ENCODE measurements at regions of chr16 and their contacts with region 1.

Region 1: GRCh38 chr16:47141773-47142485 is 1.8 kb downstream of the NETO2 start:
- DNase-seq: peak; percentile 75 to 87 (median 81)
- ATAC-seq: peak; percentile 86 to 95 (median 90)
- H3K4me3 ChIP-seq: peak overlapping the region in 11 of 12 donors; percentile 44 to 74 (median 61)
- H3K27ac ChIP-seq: peak overlapping the region in 2 of 12 donors; percentile 60 to 67
- H3K4me1 ChIP-seq: peaks cover 0 to 27% (median 3%) of the 10 kb centered on the region in 12 donors
- H3K27me3 ChIP-seq: peaks cover 0 to 4% (median 0%) of the 10 kb centered on the region in 9 donors
- CTCF ChIP-seq: peak; percentile 80 to 96 (median 90)
- POLR2A ChIP-seq: no peak

Region 2: GRCh38 chr16:46973207-46973995 is 168.5 kb before region 1 on chr16 and contains the start of gene DNAJA2:
- intact Hi-C with region 1: loop called in 1 of 10 experiments (anchors 10 kb)
- DNase-seq: peak; percentile 93 to 97 (median 94)
- ATAC-seq: peak; percentile 97 to 99 (median 99)
- H3K4me3 ChIP-seq: peak within 1 kb of the TSS; percentile 72 to 98 (median 84)
- H3K27ac ChIP-seq: peak within 1 kb of the TSS; percentile 90 to 99 (median 96)
- H3K4me1 ChIP-seq: peaks cover 0 to 53% (median 39%) of the 10 kb centered on the region in 12 donors
- H3K27me3 ChIP-seq: no peaks in the 10 kb centered on the region
- CTCF ChIP-seq: peak in 2 of 12 donors; percentile 23 to 29
- POLR2A ChIP-seq: peak in 1 of 2 donors; percentile 91
- total RNA-seq, gene DNAJA2: 58.5 to 92.6 (median 81.4) TPM

Region 3: GRCh38 chr16:47045023-47045422 is 96.9 kb before region 1 on chr16:
- intact Hi-C with region 1: loop called in 1 of 10 experiments (anchors 5 kb)
- DNase-seq: no peak
- ATAC-seq: no peak
- H3K4me3 ChIP-seq: no peak overlapping the region
- H3K27ac ChIP-seq: no peak overlapping the region
- H3K4me1 ChIP-seq: peaks cover 0 to 5% (median 0%) of the 10 kb centered on the region in 12 donors
- H3K27me3 ChIP-seq: no peaks in the 10 kb centered on the region
- CTCF ChIP-seq: peak in 1 of 12 donors; percentile 16
- POLR2A ChIP-seq: no peak

Region 4: GRCh38 chr16:47644166-47644565 is 502.2 kb after region 1 on chr16:
- intact Hi-C with region 1: loop called in 1 of 10 experiments (anchors 5 kb)
- DNase-seq: peak in 3 of 5 donors; percentile 27 to 45 (median 39)
- ATAC-seq: peak in 3 of 4 donors; percentile 24 to 55 (median 54)
- H3K4me3 ChIP-seq: no peak overlapping the region
- H3K27ac ChIP-seq: peak overlapping the region in 1 of 12 donors; percentile 23
- H3K4me1 ChIP-seq: peaks cover 0 to 25% (median 8%) of the 10 kb centered on the region in 12 donors
- H3K27me3 ChIP-seq: no peaks in the 10 kb centered on the region
- CTCF ChIP-seq: no peak
- POLR2A ChIP-seq: no peak

Region 5: GRCh38 chr16:48064971-48065370 is 923.0 kb after region 1 on chr16:
- intact Hi-C with region 1: loop called in 1 of 10 experiments (anchors 5 kb)
- DNase-seq: no peak
- ATAC-seq: no peak
- H3K4me3 ChIP-seq: no peak overlapping the region
- H3K27ac ChIP-seq: no peak overlapping the region
- H3K4me1 ChIP-seq: no peaks in the 10 kb centered on the region
- H3K27me3 ChIP-seq: no peaks in the 10 kb centered on the region
- CTCF ChIP-seq: no peak
- POLR2A ChIP-seq: no peak

Region 6: DNA sequence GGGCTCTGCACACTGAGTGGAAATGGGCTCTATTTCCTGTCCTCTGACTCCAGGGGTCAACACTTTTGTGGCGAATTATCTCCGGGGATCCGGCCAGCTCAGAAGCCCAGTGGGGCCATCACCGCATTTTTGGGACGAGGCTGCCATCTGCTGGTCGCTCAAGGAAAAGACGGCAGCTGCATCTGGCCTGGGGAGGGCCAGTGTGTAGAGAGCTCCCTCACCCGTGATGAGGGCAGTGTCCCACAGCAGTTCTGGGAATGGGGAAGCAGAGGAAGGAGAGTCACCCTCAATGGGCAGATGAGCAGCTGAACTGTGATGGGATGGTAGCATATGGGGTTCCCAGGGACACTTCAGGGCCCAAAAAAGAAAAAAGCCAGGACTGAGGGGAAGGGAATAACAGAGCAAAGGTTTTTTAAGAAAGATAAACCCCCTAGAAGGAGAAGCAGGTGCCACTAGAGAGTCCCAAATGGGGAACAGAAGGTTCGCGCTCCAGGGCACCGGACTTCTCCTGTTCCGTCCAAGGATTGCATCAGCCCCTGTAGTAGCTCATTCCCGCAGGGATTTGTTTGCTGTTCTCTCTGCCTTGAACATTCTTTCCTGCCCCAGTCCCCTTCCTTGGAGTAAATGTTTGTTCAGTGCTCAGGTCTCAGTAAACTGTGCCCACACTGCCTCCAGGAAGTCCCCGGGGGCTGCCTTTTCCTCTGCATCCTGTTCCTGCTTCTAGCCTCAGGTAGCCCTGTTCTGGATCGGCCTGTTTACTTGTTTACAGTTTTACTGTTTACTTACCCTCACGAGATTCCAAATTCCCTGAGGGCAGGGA is 1023.2 kb after region 1 on chr16:
- intact Hi-C with region 1: loop called in 3 of 10 experiments (anchors 2 kb)
- DNase-seq: peak; percentile 65 to 88 (median 77)
- ATAC-seq: peak; percentile 87 to 96 (median 94)
- H3K4me3 ChIP-seq: no peak overlapping the region
- H3K27ac ChIP-seq: no peak overlapping the region
- H3K4me1 ChIP-seq: peaks cover 0 to 15% (median 5%) of the 10 kb centered on the region in 12 donors
- H3K27me3 ChIP-seq: no peaks in the 10 kb centered on the region
- CTCF ChIP-seq: peak; percentile 76 to 94 (median 85)
- POLR2A ChIP-seq: no peak

Measured in heart left ventricle (tissue), 16 donors.